Caki2 (cell line): ENCODE measurements at regions of chr2 and their contacts with region 1.

Region 1: DNA sequence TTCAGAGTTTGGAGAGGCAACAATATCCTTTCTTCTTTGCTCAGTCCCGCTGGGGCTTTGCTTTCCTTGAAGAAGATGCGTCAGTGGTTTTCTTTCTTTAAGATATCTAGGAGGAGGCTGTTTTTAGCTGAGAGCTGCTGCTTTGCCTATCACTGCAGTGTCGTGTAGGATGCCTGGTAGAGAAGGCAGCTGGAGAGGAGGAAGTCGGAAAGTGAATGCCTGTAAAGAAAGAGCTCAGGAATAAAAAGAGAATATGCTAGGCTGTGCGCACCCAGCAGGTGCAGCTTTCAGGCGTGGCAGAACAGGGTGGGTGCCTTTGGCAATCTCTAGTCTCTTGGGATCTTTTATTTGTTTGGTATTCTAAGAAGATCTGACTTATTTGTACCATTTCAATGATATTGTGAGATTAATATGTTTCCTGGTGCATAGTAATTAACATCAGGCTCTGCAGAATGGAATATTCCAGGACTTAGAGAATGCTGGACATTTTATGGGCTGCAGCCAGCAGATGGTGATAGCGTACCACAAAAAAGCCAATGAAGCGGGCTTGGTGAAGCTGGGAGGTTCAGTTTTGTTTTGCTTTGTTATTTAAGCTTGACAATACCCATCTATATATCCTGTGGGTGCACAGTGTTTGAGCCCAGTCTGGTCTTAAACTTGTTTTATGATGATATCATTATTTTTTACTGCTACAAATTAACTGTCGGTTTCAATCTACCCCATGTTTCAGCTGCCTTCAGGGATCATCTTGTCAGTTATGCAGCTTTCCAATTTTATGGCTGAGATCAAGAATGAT is 34.9 kb downstream of the CAVIN2 start:
- DNase-seq: peak; percentile 54

Region 2: GRCh38 chr2:191571163-191571769 is 240.7 kb before region 1 on chr2:
- in situ Hi-C with region 1: no loop called
- DNase-seq: peak; percentile 72

Region 3: DNA sequence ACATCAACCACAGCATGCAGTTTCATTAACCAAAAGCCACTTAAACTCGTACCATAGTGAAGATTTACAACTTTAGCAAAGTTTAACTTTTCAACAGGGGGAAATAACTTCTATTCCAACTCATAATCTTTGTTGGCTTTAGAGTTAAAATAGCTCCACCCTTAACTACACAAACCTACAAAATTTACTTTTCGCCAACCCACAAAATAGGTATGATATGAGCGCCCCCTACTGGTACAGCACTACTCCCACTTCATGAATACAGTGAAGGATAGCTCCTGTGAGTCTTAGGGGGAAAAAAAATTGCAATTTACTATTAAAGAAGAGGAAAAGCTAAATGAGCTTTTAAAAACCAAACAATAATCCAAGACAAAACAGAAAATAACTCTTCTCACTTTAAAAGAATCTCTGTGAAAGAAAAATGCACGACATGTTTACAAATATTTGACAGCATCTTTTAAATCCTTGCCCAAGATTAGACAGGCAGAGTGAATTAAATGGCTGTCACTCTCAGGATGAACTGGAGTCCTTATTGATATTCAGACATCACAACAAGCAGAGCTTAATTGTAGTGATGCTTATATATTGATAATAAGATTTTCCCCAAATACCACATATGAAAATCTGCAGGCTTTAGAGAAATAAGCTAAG is 350.5 kb after region 1 on chr2:
- in situ Hi-C with region 1: loop called (anchors 25 kb)
- DNase-seq: peak; percentile 64